ENCODE measurements at regions of chr3 and their contacts with region 1.

Region 1: DNA sequence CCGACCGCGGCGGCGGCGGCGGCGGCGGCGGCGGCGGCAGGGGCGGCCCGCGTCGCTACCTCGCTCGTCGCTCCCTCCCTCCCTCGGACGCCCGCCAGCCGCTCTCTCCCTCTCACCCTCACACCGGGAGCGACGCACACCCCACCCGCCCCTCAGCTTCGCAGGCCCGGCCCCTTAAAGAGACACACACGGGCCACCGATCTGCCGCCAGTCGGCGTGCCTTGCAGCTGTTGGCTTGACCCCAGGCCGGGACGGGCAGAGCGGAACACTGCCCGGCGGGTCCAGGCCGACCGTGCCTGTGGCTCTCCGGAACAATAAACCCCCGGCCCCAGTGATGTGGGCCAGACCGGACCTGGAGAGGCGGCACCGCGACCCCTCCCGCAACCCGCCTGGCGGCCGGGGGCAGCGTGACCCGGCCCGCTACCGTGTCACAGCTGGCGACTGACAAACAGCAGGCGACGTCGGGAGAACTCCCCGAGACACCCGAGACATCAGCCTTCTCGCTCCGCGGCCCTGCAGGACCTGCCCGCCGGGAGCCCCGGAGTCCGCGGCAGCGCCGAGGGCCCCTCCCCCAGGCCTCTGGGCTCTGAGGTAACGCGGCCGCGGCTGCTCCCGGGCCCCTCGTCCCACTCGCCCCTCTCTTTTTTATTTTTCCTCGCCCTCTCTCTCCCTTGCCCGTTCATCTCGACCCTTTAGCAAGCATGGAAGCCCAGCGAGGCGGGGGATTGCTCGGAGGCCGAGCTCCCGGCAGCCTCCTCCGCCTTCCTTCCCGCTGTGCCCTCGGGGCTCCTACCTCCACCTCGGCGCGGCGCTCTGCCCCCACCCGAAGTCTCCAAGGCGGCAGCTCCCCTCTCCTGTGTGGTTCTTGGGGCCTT is at the start of gene SETD2:
- DNase-seq: peak; percentile 81
- H3K4me3 Mint-ChIP-seq: peak within 1 kb of the TSS; percentile 99
- H3K27ac Mint-ChIP-seq: peak within 1 kb of the TSS; percentile 99
- H3K4me1 Mint-ChIP-seq: peaks cover 35% of the 10 kb centered on the region
- H3K27me3 Mint-ChIP-seq: no peaks in the 10 kb centered on the region
- total RNA-seq, gene SETD2: 41.2 and 43.6 TPM in 2 replicates

Region 2: DNA sequence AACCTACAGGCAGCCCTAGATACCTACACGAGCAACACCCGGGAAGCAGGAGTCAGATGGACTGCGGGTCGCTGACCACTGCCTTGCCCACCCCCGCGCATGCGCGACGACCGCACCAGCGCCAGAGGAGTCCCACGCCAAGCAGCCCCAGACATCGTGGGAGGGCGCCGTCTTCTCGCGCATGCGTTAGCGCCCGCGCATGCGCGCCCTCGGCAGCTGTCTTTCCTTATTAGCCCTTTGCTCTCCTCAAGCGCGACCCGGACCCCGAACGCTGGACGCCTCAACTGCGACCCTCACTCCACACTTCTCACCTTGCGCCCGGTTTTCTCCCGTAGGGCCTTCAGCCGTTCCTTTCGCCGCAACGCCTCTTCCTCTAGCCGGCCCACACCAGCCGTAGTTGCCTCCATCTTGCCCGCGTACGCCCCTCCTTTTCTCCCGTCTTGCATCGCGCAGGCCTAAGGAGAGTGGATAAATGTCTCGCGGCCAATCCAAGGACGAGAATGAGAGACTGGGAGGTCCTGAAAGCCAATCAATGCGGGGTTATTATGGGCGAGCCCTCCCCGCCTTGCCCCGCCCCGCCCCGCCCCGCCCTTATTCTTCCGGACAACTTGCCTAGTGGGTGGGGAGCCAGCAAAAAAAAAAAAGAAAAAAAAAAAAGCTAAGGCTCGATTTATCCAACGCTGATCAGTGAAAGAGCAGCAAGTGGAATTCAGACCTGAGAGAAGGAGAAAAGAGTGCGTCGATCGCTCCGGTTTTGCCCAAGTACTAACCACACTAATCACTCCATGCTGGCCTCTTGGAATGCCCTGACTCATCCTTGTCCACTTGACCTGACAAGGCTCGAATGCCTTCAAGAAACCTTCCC is 187.7 kb before region 1 on chr3 and contains the start of gene CCDC12:
- intact Hi-C with region 1: loop called (anchors 5 kb)
- DNase-seq: peak; percentile 94
- H3K4me3 Mint-ChIP-seq: peak within 1 kb of the TSS; percentile 97
- H3K27ac Mint-ChIP-seq: peak within 1 kb of the TSS; percentile 98
- H3K4me1 Mint-ChIP-seq: peaks cover 44% of the 10 kb centered on the region
- H3K27me3 Mint-ChIP-seq: no peaks in the 10 kb centered on the region
- total RNA-seq, gene CCDC12: 65.3 and 69.2 TPM in 2 replicates

Region 3: DNA sequence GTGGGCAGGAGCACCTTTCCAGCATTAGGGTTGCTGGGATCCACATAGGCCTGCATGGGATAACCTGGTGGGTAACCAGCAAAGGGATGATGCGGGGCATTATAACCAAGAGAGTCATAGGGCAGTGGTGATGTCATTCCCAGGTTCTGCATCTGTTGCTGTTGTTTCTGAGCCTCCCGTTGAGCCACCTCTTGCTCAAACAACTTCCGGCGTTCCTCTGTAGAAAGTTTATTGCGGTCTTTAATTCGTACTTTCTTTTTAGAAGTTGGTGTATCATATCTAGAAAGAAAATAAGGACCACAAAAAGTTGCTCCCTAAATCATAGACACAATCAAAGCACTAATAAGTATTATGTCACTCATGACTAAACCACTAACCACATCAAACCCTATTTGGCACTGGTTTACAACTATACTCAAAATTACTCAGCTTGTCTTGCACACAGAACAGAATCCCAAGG is 107.0 kb before region 1 on chr3:
- intact Hi-C with region 1: loop called (anchors 10 kb)
- DNase-seq: peak; percentile 47
- H3K4me3 Mint-ChIP-seq: no peak overlapping the region
- H3K27ac Mint-ChIP-seq: peak overlapping the region; percentile 69
- H3K4me1 Mint-ChIP-seq: peaks cover 30% of the 10 kb centered on the region
- H3K27me3 Mint-ChIP-seq: no peaks in the 10 kb centered on the region

Region 4: DNA sequence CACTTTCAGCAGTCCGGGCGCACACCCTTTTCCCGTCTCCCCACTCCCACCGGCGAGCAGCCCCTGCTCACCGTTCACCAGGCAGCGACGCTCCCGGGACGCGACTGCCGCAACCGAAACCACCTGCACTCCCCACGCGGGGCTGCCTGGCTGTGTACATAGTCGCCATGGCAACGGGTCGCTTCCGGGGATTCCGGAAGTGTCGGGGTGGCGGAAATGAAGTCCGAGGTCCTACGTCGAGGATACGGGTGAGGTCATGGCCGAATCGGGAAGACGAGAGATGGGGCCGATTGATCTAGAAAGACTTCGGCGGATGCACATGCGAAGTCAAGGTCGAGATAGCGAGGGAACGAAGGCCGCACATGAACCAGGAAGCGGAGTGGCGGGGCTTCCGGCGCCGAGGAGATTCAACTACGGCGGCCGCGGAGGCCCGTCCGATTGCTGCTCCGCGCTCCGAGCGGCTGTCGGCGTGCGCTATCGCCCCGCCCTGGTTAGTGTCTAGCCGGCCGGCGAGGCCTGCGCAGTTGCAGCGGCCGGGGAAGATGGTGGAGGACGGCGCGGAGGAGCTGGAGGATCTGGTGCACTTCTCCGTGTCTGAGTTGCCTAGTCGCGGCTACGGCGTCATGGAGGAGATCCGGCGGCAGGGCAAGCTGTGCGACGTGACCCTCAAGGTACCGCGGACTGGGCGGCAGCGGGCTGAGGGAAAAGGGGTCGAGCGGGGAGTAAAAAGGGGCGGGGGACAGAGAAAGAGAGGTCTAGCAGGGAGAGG is 118.4 kb after region 1 on chr3 and contains the starts of genes KIF9 and KLHL18:
- intact Hi-C with region 1: loop called (anchors 5 kb)
- DNase-seq: peak; percentile 95
- H3K4me3 Mint-ChIP-seq: peak within 1 kb of the TSS; percentile 98
- H3K27ac Mint-ChIP-seq: peak within 1 kb of the TSS; percentile 100
- H3K4me1 Mint-ChIP-seq: peaks cover 17% of the 10 kb centered on the region
- H3K27me3 Mint-ChIP-seq: no peaks in the 10 kb centered on the region
- total RNA-seq, gene KIF9: 3.5 and 4.4 TPM in 2 replicates
- total RNA-seq, gene KLHL18: 35.7 and 40.9 TPM in 2 replicates

Region 5: DNA sequence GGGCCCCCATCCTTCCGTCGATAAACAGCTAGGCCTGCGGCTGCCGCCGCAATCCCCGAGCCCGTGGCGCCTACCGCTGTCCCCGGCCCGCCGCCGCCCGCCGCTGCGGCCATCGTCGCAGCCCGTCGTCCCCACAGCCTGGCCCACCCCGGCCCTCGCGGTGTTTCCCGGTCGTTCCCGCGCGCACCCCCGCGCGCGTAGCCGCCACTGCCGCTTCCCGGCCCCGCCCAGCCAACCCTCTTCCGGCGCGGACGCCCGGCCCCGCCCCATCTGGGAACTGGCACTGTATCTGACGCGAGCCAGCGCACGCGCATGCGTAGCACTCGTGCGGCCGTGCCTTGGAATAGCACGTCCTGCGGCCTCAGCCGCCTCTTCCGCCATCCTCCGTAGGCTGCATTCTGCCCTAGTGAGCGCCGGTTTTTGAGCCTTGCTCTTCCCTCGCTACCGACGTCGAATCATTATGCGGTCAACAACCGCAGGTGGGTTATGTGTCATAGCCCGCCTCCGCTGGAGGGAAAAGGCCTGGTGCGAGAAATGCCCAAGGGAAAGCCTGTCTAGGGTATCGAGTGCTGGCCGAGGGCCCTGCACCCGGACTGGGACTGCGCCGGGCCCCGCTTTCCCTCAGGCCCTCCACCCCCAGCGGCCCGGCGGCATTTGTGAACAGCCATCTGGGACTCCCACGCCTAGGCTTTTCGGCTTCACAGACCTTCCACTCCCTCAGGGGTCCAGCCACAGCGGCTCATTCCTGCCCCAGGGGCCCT is 617.6 kb after region 1 on chr3 and contains the start of gene SMARCC1:
- intact Hi-C with region 1: loop called (anchors 5 kb)
- DNase-seq: peak; percentile 99
- H3K4me3 Mint-ChIP-seq: peak within 1 kb of the TSS; percentile 92
- H3K27ac Mint-ChIP-seq: peak within 1 kb of the TSS; percentile 99
- H3K4me1 Mint-ChIP-seq: peaks cover 17% of the 10 kb centered on the region
- H3K27me3 Mint-ChIP-seq: no peaks in the 10 kb centered on the region
- total RNA-seq, gene SMARCC1: 150 and 166 TPM in 2 replicates

Measured in activated T-helper 2 cell treated with anti-CD3 and anti-CD28 coated beads, Interferon-gamma antibody, Interleukin-2, Interleukin-4, amounts not matched to agents 10 μg/mL and 5 μg/mL and 100 μg/mL, durations not matched to agents 14 hours and 24 hours and 36 hours (primary cell).